GM12878 (cell line): ENCODE measurements at regions of chrX and their contacts with region 1.

Region 1: DNA sequence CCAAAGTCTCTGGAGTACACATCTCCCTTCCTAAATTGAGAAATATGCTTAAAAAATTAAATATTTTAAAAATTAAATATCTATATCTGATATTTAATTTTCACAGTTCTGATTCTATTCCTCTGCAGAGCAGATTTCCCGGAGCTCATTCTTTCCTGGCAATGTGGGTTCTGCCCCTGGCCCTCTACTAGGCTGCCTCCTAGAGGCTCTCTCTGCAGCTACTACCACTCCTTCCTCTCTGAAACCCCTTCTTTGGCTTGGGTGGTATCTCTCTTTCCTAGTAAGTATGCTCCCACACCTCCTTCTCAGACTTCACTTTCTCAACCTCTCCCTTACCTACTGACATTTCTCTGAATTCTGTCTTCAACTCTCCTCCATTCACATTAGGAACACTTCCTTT is 45.3 kb downstream of the RPGR start:
- DNase-seq: no peak
- ATAC-seq: peak; percentile 54; the same call in 1 of the 3 replicates
- H3K4me3 ChIP-seq: no peak overlapping the region
- H3K27ac ChIP-seq: no peak overlapping the region
- H3K4me1 ChIP-seq: no peaks in the 10 kb centered on the region
- H3K27me3 ChIP-seq: no peaks in the 10 kb centered on the region
- CTCF ChIP-seq: peak; percentile 9 to 32 (median 26); a peak in 3 of 6 replicates
- EP300 ChIP-seq: no peak
- POLR2A ChIP-seq: no peak
- RAD21 ChIP-seq: peak; percentile 41

Region 2: GRCh38 chrX:38192007-38192810 is 89.8 kb before region 1 on chrX:
- CTCF ChIA-PET with region 1: interaction called, 7 read pairs
- POLR2A ChIA-PET with region 1: no interaction called
- RAD21 ChIA-PET with region 1: no interaction called
- SMC1A ChIA-PET with region 1: interaction called, 4 read pairs
- in situ Hi-C with region 1: no loop called
- intact Hi-C with region 1: loop called (anchors 5 kb)
- DNase-seq: no peak
- ATAC-seq: peak; percentile 87
- H3K4me3 ChIP-seq: no peak overlapping the region
- H3K27ac ChIP-seq: no peak overlapping the region
- H3K4me1 ChIP-seq: 0 out of 2 replicates have a peak, but pooled peaks cover 2% of the 10 kb centered on the region
- H3K27me3 ChIP-seq: no peaks in the 10 kb centered on the region; a peak in 1 of 4 replicates
- CTCF ChIP-seq: peak; percentile 45 to 54 (median 51)
- EP300 ChIP-seq: no peak
- POLR2A ChIP-seq: no peak
- RAD21 ChIP-seq: peak; percentile 68

Region 3: GRCh38 chrX:38260231-38260630 is 21.8 kb before region 1 on chrX:
- CTCF ChIA-PET with region 1: interaction called, 25 read pairs
- POLR2A ChIA-PET with region 1: interaction called, 3 read pairs
- RAD21 ChIA-PET with region 1: interaction called, 24 read pairs
- SMC1A ChIA-PET with region 1: interaction called, 25 read pairs
- in situ Hi-C with region 1: no loop called
- intact Hi-C with region 1: no loop called
- DNase-seq: no peak
- ATAC-seq: peak; percentile 89
- H3K4me3 ChIP-seq: no peak overlapping the region
- H3K27ac ChIP-seq: no peak overlapping the region
- H3K4me1 ChIP-seq: no peaks in the 10 kb centered on the region
- H3K27me3 ChIP-seq: no peaks in the 10 kb centered on the region
- CTCF ChIP-seq: peak; percentile 50 to 68 (median 51)
- EP300 ChIP-seq: no peak
- POLR2A ChIP-seq: no peak
- RAD21 ChIP-seq: peak; percentile 65

Region 4: DNA sequence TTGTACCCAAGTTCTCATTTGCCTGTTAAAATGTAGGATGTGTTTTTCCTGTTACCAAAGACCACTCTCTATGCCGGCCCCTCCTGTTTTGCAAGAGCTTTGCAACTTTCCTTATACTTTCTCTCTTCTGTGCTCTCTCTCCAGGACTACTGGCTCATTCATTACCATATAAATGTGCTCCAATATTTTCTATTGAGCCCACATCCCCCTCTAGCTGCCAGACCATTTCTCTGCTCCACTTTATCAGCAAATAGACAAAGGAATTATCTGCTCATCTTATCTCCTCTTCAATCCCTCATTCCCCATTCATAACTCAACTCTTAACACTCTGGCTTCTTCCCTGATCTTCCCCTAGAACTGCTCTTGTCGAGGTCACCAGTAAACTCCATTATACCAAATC is 11.7 kb after region 1 on chrX:
- CTCF ChIA-PET with region 1: interaction called, 25 read pairs
- POLR2A ChIA-PET with region 1: interaction called, 3 read pairs
- RAD21 ChIA-PET with region 1: no interaction called
- SMC1A ChIA-PET with region 1: interaction called, 12 read pairs
- in situ Hi-C with region 1: no loop called
- intact Hi-C with region 1: no loop called
- DNase-seq: no peak
- ATAC-seq: no peak
- H3K4me3 ChIP-seq: no peak overlapping the region
- H3K27ac ChIP-seq: no peak overlapping the region
- H3K4me1 ChIP-seq: no peaks in the 10 kb centered on the region
- H3K27me3 ChIP-seq: no peaks in the 10 kb centered on the region
- CTCF ChIP-seq: peak in 1 of 3 experiments; percentile 23; a peak in 1 of 6 replicates
- EP300 ChIP-seq: no peak
- POLR2A ChIP-seq: no peak
- RAD21 ChIP-seq: peak; percentile 30; the same call in 1 of the 2 replicates